OCI-LY7 (cell line): ENCODE measurements at regions of chr21 and their contacts with region 1.

Region 1: DNA sequence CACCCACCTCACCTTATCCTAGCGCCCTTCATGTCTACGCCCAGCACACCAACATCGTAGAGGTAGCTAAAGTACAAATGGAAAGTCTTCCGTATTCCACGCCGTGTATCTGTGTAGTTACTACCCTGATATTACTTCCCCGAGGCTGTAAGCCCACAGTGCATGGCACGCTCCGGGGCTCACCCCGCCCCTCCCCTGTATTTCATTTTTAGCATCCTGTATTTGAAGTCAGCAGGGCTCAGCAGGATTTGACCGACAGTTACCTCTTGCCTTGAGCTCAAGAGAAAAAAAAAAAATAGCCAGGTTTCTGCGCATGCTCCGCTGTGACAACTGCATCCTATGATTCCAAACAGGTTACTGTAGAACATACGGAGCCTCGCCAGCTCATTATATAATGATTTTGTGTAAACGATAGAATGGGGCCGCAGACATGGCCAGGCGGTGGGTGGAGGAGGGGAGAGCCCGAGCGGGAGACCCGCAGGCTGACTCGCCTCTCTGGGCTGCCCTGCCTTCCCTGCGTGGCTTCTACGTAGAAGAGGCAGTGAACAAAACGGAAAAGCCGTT is 1.3 kb downstream of the ABCG1 start:
- DNase-seq: peak; percentile 89
- H3K4me3 ChIP-seq: peak overlapping the region; percentile 94
- H3K27ac ChIP-seq: peak overlapping the region; percentile 78
- H3K4me1 ChIP-seq: peaks cover 60% of the 10 kb centered on the region
- CTCF ChIP-seq: no peak

Region 2: DNA sequence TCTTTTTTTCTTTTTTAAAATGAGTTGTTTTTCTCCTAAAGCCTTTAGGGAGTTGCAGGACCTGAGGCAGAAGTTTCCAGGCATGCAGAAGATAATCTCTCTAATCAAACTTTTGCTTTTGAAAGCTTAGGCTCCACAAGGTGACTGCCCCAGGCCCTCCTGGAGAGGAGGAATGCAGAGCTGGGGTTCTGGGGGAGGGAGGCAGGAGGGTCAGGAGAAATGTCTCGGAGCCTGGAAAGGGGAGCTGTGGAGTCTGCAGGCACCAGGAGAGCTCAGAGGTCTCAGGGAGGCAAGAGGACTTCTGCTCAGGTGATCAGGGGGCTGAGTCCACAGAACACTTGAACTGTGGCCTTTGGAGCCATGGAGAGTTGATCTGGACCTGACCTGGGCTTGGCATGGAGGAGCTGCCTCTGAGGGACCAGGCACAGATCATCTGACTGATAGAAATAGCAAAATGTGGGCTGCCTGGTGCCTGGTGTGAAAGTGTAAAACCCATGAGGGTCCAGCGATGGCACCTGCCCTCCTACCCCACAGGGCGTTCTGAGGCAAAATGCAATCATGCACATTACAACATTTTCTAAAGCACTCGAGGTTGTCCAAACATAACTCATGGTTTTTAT is 11.3 kb before region 1 on chr21:
- CTCF ChIA-PET with region 1: no interaction called
- POLR2A ChIA-PET with region 1: interaction called, 10 read pairs
- intact Hi-C with region 1: no loop called
- DNase-seq: no peak
- H3K4me3 ChIP-seq: no peak overlapping the region
- H3K27ac ChIP-seq: no peak overlapping the region
- H3K4me1 ChIP-seq: no peaks in the 10 kb centered on the region
- CTCF ChIP-seq: no peak

Region 3: GRCh38 chr21:42238185-42238934 is 18.1 kb after region 1 on chr21:
- CTCF ChIA-PET with region 1: interaction called, 12 read pairs
- POLR2A ChIA-PET with region 1: interaction called, 22 read pairs
- intact Hi-C with region 1: no loop called
- DNase-seq: peak; percentile 33
- H3K4me3 ChIP-seq: peak overlapping the region; percentile 24
- H3K27ac ChIP-seq: peak overlapping the region; percentile 99
- H3K4me1 ChIP-seq: peaks cover 95% of the 10 kb centered on the region
- CTCF ChIP-seq: no peak; the same call in 1 of the 2 replicates

Region 4: DNA sequence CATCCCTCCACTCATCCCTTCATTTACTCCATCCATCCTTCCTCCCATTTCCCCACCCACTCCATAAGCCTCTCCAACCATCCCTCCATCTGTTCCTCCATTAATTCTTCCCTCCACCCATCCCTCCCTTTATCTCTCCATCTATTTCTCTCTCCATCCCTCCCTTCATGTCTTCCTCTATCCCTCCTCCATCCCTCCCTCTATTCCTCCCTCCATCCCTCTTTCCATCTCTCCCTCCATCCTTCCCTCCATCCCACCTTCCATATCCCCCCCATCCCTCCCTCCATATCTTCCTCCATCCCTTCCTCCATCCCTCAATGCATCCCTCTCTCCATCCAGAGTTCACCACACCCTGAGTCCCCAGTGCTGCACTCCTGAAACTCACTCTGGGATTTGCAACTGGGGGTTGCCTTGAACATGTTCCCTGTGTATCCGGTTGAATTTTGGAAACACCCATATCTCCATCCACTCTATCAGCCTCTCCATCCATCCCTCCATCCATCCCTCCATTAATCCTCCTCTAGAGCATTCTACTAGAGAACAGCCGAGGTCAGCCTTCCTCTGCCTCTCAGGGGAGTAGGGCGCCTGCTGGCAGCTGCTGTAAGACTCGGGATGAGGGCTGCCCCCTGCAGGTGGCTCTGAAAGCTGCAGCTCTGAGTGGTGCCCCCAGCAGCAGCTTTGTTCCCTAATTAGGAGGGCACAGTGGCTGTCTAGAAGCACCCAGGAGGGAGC is 38.1 kb after region 1 on chr21:
- CTCF ChIA-PET with region 1: interaction called, 5 read pairs
- POLR2A ChIA-PET with region 1: no interaction called
- intact Hi-C with region 1: loop called (anchors 2 kb)
- DNase-seq: peak; percentile 87
- H3K4me3 ChIP-seq: no peak overlapping the region
- H3K27ac ChIP-seq: no peak overlapping the region
- H3K4me1 ChIP-seq: peaks cover 48% of the 10 kb centered on the region
- CTCF ChIP-seq: peak; percentile 99